CD4-positive, alpha-beta T cell (primary cell): ENCODE measurements at regions of chr2 and their contacts with region 1.

Region 1: DNA sequence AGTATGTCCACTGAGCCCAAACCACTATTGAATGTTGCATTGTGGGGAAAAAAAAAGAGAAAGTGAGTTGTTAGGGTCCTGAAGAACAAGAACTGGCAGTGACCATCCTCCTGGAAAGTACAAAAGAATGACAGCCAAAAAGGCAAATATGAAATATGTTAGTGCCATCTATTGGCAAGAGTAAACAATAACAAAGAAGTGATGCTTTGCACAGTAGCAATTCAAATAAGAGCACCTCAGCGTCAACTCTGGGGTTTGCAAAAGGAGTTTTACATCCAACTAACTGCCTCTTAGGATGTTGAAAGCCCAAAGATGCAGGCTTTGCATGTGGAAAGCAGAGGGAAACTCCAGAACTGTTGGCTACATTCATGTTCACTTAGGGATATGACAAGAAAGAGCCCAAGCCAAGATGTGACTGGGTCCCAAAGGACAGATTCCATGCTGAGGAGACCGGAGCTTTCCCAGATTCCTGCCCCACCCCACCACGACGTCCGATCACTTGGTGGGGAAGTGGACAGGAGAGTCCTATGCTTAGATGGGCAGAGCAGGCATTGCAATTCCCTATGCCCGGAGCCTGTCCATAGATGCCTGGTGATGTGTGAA is 15.6 kb downstream of the TRABD2A start:
- DNase-seq: peak in 5 of 14 experiments; percentile 15 to 73 (median 71)
- ATAC-seq: peak; percentile 65
- H3K4me3 ChIP-seq: no peak overlapping the region
- H3K4me3 Mint-ChIP-seq: peak overlapping the region; percentile 42
- H3K27ac ChIP-seq: peak overlapping the region in 1 of 2 donors; percentile 36
- H3K27ac Mint-ChIP-seq: peak overlapping the region; percentile 94
- H3K4me1 ChIP-seq: peaks cover 70% of the 10 kb centered on the region
- H3K4me1 Mint-ChIP-seq: peaks cover 97% of the 10 kb centered on the region
- H3K27me3 ChIP-seq: no peaks in the 10 kb centered on the region
- H3K27me3 Mint-ChIP-seq: no peaks in the 10 kb centered on the region
- CTCF ChIP-seq: peak; percentile 75

Region 2: DNA sequence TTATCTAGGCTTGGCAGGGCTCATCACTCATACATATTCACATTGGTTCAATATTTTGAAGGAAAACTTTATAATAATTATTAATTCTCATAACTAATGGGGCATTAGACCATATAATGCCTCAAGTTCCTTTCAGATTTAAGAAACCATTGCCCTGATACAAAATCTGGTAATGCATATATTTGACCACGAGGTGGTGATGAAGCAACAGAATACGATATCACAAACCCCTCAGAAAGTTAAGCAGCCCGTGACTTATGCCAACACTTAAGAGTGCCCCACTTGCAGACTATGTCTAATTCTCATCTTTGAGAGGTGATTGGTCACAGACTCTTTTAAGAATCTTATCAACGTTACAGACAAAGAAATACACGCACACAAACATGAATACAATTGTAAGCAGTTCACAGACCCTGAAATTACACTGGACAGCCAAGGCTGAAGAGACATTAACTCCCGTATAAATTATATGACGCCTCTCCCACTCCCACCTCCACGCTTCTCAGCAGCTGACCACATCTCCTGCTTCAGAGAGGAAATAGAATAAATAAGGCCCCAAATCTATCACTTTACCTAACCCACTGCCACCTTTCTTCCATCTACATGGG is 369.6 kb before region 1 on chr2:
- CTCF ChIA-PET with region 1: no interaction called
- POLR2A ChIA-PET with region 1: interaction called, 5 read pairs
- intact Hi-C with region 1: loop called (anchors 1 kb)
- DNase-seq: peak in 9 of 14 experiments; percentile 5 to 86 (median 26)
- ATAC-seq: peak; percentile 98
- H3K4me3 ChIP-seq: no peak overlapping the region
- H3K4me3 Mint-ChIP-seq: no peak overlapping the region
- H3K27ac ChIP-seq: no peak overlapping the region
- H3K27ac Mint-ChIP-seq: peak overlapping the region; percentile 5
- H3K4me1 ChIP-seq: peaks cover 4% of the 10 kb centered on the region
- H3K4me1 Mint-ChIP-seq: peaks cover 27% of the 10 kb centered on the region
- H3K27me3 ChIP-seq: no peaks in the 10 kb centered on the region
- H3K27me3 Mint-ChIP-seq: no peaks in the 10 kb centered on the region
- CTCF ChIP-seq: peak; percentile 77

Region 3: GRCh38 chr2:84631047-84631446 is 234.2 kb before region 1 on chr2:
- CTCF ChIA-PET with region 1: no interaction called
- POLR2A ChIA-PET with region 1: no interaction called
- intact Hi-C with region 1: loop called (anchors 5 kb)
- DNase-seq: peak in 3 of 14 experiments; percentile 62 to 68 (median 64)
- ATAC-seq: peak; percentile 70
- H3K4me3 ChIP-seq: no peak overlapping the region
- H3K4me3 Mint-ChIP-seq: no peak overlapping the region
- H3K27ac ChIP-seq: no peak overlapping the region
- H3K27ac Mint-ChIP-seq: no peak overlapping the region
- H3K4me1 ChIP-seq: peaks cover 10% of the 10 kb centered on the region
- H3K4me1 Mint-ChIP-seq: peaks cover 48% of the 10 kb centered on the region
- H3K27me3 ChIP-seq: no peaks in the 10 kb centered on the region
- H3K27me3 Mint-ChIP-seq: no peaks in the 10 kb centered on the region
- CTCF ChIP-seq: peak; percentile 67

Region 4: DNA sequence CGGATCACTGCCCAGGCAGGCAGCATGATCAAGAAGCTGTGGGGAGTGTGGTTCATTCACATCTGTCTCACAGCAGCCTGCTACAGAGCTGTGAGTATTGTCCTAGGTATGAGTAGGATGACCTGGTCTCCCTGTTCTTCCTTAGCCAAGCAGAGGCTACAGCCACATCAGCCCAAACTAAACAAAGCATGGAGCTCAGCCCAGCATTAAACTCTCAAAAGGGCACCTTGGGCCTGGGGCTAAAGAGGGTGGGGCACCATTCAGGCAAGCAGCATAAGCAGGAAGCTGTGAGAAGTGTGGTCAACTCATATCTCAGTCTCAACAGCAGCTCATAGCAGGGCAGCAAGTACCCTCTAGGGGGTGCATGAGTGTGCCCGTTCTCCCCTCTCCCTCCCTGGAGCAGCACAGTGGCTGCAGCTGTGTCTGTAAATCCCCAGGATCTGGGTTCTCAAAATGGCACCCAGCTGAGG is 124.0 kb before region 1 on chr2:
- CTCF ChIA-PET with region 1: no interaction called
- POLR2A ChIA-PET with region 1: no interaction called
- intact Hi-C with region 1: loop called in 1 of 2 experiments (anchors 5 kb)
- DNase-seq: peak; percentile 7 to 85 (median 27)
- ATAC-seq: peak; percentile 91
- H3K4me3 ChIP-seq: no peak overlapping the region
- H3K4me3 Mint-ChIP-seq: no peak overlapping the region
- H3K27ac ChIP-seq: no peak overlapping the region
- H3K27ac Mint-ChIP-seq: peak overlapping the region; percentile 16
- H3K4me1 ChIP-seq: peaks cover 17% of the 10 kb centered on the region
- H3K4me1 Mint-ChIP-seq: peaks cover 56% of the 10 kb centered on the region
- H3K27me3 ChIP-seq: no peaks in the 10 kb centered on the region
- H3K27me3 Mint-ChIP-seq: no peaks in the 10 kb centered on the region
- CTCF ChIP-seq: peak; percentile 52

Region 5: DNA sequence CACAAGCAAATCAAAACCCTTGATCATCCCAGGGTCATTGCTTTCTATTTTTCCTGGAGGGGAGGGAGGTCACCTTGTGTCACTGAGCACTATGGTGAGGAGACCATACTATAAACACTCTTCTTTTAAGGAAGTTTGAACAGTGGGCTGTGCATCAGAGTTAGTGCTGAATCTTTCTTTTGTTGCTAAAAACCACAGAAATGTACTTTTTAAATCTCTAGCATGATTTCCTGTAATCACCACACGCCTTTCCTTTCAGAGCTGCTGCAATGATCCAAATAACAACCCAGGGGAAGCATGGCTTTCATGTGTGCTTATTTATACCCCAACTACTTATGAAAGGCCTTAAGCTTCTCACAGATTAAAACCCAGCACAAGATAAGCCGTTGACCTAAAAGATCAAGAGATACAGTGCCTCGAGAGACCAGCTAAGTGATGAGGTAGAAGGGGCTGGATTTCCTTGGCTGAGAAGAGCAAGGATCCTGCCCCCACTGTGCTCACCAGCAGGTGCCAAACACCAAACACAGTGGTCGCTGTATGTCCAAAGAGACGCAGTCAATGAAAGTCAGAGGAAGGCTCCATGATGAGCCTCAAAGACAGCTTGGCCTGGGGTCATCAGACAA is 19.1 kb before region 1 on chr2:
- CTCF ChIA-PET with region 1: interaction called, 5 read pairs
- POLR2A ChIA-PET with region 1: interaction called, 132 read pairs
- intact Hi-C with region 1: loop called in 1 of 2 experiments (anchors 2 kb)
- DNase-seq: peak in 9 of 14 experiments; percentile 22 to 87 (median 60)
- ATAC-seq: peak; percentile 66
- H3K4me3 ChIP-seq: no peak overlapping the region
- H3K4me3 Mint-ChIP-seq: peak overlapping the region; percentile 84
- H3K27ac ChIP-seq: peak overlapping the region; percentile 81 to 90
- H3K27ac Mint-ChIP-seq: peak overlapping the region; percentile 96
- H3K4me1 ChIP-seq: peaks cover 100% of the 10 kb centered on the region
- H3K4me1 Mint-ChIP-seq: peaks cover 95% of the 10 kb centered on the region
- H3K27me3 ChIP-seq: no peaks in the 10 kb centered on the region
- H3K27me3 Mint-ChIP-seq: no peaks in the 10 kb centered on the region
- CTCF ChIP-seq: no peak